Activated T-helper 1 cell treated with anti-CD3 and anti-CD28 coated beads, Interleukin-12 subunit alpha, Interleukin-12 subunit beta, Interleukin-2, Interleukin-4 antibody, amounts not matched to agents 30 ng/mL and 10 ng/mL and 1 ng/mL, durations not matched to agents 14 hours and 24 hours and 36 hours (primary cell): ENCODE measurements at regions of chr20 and their contacts with region 1.

Region 1: GRCh38 chr20:36573103-36573794 is at the start of gene TGIF2:
- DNase-seq: peak; percentile 79
- H3K4me3 Mint-ChIP-seq: peak within 1 kb of the TSS; percentile 96
- H3K27ac Mint-ChIP-seq: peak within 1 kb of the TSS; percentile 97
- H3K4me1 Mint-ChIP-seq: peaks cover 37% of the 10 kb centered on the region
- H3K27me3 Mint-ChIP-seq: peaks cover 3% of the 10 kb centered on the region
- total RNA-seq, gene TGIF2: 50.9 and 55.4 TPM in 2 replicates

Region 2: GRCh38 chr20:36421641-36422040 is 151.6 kb before region 1 on chr20:
- intact Hi-C with region 1: no loop called
- DNase-seq: no peak
- H3K4me3 Mint-ChIP-seq: no peak overlapping the region
- H3K27ac Mint-ChIP-seq: no peak overlapping the region
- H3K4me1 Mint-ChIP-seq: no peaks in the 10 kb centered on the region
- H3K27me3 Mint-ChIP-seq: peaks cover 8% of the 10 kb centered on the region

Region 3: GRCh38 chr20:36550797-36551299 is 22.4 kb before region 1 on chr20:
- intact Hi-C with region 1: loop called (anchors 1 kb)
- DNase-seq: no peak
- H3K4me3 Mint-ChIP-seq: no peak overlapping the region
- H3K27ac Mint-ChIP-seq: no peak overlapping the region
- H3K4me1 Mint-ChIP-seq: no peaks in the 10 kb centered on the region
- H3K27me3 Mint-ChIP-seq: no peaks in the 10 kb centered on the region

Region 4: GRCh38 chr20:36591854-36592641 is 18.8 kb after region 1 on chr20:
- intact Hi-C with region 1: loop called (anchors 1 kb)
- DNase-seq: peak; percentile 36
- H3K4me3 Mint-ChIP-seq: peak overlapping the region; percentile 27
- H3K27ac Mint-ChIP-seq: peak overlapping the region; percentile 77
- H3K4me1 Mint-ChIP-seq: peaks cover 62% of the 10 kb centered on the region
- H3K27me3 Mint-ChIP-seq: no peaks in the 10 kb centered on the region

Region 5: DNA sequence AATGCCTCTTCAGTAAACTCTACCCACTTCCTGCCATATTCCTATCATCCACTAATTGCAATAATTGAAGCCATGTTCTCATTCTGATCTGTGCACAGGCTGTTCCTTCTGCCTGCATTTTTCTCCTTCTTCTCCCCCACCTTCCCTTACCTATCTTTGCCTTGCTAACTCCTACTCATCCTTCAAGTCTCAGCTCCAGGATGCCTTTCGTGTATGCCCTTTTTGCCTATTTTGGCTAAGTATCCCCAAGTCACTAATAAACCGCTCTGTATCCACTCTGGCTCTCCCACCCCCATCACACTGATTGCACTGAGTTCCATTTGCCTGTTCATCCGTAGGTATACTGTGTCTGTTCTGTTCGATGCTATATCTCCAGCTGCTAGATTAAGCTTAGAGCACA is 599.6 kb after region 1 on chr20:
- intact Hi-C with region 1: no loop called
- DNase-seq: no peak
- H3K4me3 Mint-ChIP-seq: no peak overlapping the region
- H3K27ac Mint-ChIP-seq: no peak overlapping the region
- H3K4me1 Mint-ChIP-seq: peaks cover under 1% of the 10 kb centered on the region
- H3K27me3 Mint-ChIP-seq: peaks cover 9% of the 10 kb centered on the region